AG04449 (cell line): ENCODE measurements at regions of chr2 and their contacts with region 1.

Region 1: GRCh38 chr2:94956797-94957391 is 68.6 kb upstream of the MAL start:
- DNase-seq: no peak
- H3K4me3 ChIP-seq: no peak overlapping the region
- CTCF ChIP-seq: peak; percentile 74

Region 2: DNA sequence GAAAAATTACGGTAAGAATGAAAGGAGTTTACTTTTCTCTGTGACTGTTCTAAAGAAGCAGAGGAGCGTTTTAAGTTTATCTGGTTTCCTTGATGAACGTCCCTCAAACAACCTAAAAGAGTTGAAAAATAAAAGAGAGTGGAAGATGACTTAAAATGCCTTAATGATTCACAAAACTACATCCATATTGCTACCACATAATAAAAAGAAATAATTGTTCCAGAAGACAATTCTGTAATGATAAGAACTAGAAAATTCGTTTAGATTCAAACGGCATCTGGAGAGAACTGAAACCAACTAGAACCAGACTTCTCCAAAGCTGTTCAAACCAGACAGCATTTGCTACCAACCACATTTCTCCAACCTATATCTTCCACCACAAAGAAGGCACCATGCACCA is 17.5 kb before region 1 on chr2:
- CTCF ChIA-PET with region 1: interaction called, 10 read pairs
- POLR2A ChIA-PET with region 1: no interaction called
- DNase-seq: no peak
- H3K4me3 ChIP-seq: no peak overlapping the region
- CTCF ChIP-seq: no peak

Region 3: DNA sequence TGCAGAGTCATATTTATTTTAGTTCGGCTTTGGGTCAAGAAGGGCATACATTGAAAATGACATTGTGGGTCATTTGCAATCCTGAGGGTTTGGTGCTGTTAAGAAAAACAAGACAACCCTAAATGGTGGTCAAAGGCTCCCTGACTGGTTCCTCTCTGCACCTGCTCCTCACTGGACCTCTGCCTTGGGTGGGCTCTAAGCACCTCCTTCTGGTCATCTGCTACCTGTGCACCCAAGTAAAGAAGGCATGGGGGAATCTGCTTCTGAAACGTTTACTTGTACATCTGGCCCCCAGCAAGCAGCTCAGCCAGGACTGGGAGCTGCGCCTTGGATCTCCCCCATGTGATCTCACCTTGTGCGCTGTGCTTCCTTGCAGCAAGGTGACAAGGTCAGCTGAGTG is 13.5 kb after region 1 on chr2:
- CTCF ChIA-PET with region 1: interaction called, 12 read pairs
- POLR2A ChIA-PET with region 1: no interaction called
- DNase-seq: no peak
- H3K4me3 ChIP-seq: no peak overlapping the region
- CTCF ChIP-seq: no peak

Region 4: DNA sequence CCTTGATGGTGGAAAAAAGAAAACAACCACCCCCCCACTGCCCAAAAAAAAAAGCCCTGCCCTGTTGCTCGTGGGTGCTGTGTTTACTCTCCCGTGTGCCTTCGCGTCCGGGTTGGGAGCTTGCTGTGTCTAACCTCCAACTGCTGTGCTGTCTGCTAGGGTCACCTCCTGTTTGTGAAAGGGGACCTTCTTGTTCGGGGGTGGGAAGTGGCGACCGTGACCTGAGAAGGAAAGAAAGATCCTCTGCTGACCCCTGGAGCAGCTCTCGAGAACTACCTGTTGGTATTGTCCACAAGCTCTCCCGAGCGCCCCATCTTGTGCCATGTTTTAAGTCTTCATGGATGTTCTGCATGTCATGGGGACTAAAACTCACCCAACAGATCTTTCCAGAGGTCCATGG is 96.6 kb after region 1 on chr2:
- CTCF ChIA-PET with region 1: no interaction called
- POLR2A ChIA-PET with region 1: no interaction called
- DNase-seq: no peak
- H3K4me3 ChIP-seq: no peak overlapping the region
- CTCF ChIP-seq: no peak

Region 5: GRCh38 chr2:95138702-95139101 is 181.8 kb after region 1 on chr2:
- CTCF ChIA-PET with region 1: no interaction called
- POLR2A ChIA-PET with region 1: no interaction called
- DNase-seq: no peak
- H3K4me3 ChIP-seq: no peak overlapping the region
- CTCF ChIP-seq: no peak

Region 6: DNA sequence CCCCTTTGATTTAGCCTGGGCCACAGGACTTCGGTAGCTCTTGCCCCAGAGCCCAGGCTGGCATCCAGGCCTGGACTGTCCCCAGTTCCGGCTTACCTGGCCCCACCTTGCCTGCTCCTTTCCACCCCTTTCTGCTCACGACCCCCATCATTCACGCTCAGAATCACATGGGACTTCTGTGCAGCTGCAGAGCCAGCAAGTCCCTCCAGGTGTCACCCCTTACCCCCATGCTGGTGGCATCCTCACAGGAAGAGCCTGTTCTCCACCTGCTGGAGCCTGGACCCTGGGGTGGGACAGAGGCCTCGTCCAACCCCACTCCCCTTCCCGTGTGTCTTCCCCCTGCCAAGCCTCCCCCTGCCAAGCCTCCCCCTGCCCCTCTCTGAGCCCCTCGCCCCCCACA is 332.4 kb after region 1 on chr2:
- CTCF ChIA-PET with region 1: no interaction called
- POLR2A ChIA-PET with region 1: no interaction called
- DNase-seq: no peak
- H3K4me3 ChIP-seq: no peak overlapping the region
- CTCF ChIP-seq: no peak